Endothelial cell of umbilical vein (primary cell): ENCODE measurements at regions of chr1 and their contacts with region 1.

Region 1: GRCh38 chr1:6924891-6925290 is 139.6 kb downstream of the CAMTA1 start:
- DNase-seq: no peak
- H3K4me3 ChIP-seq: no peak overlapping the region
- H3K27ac ChIP-seq: no peak overlapping the region
- H3K4me1 ChIP-seq: no peaks in the 10 kb centered on the region
- H3K27me3 ChIP-seq: no peaks in the 10 kb centered on the region
- CTCF ChIP-seq: no peak
- POLR2A ChIP-seq: no peak

Region 2: GRCh38 chr1:6911974-6912373 is 12.9 kb before region 1 on chr1:
- CTCF ChIA-PET with region 1: no interaction called
- POLR2A ChIA-PET with region 1: no interaction called
- dilution Hi-C with region 1: no loop called
- intact Hi-C with region 1: loop called (anchors 1 kb)
- DNase-seq: peak; percentile 72
- H3K4me3 ChIP-seq: no peak overlapping the region
- H3K27ac ChIP-seq: no peak overlapping the region
- H3K4me1 ChIP-seq: peaks cover 2% of the 10 kb centered on the region
- H3K27me3 ChIP-seq: no peaks in the 10 kb centered on the region
- CTCF ChIP-seq: no peak
- POLR2A ChIP-seq: no peak

Region 3: GRCh38 chr1:6948861-6949260 is 24.0 kb after region 1 on chr1:
- CTCF ChIA-PET with region 1: no interaction called
- POLR2A ChIA-PET with region 1: no interaction called
- dilution Hi-C with region 1: no loop called
- intact Hi-C with region 1: no loop called
- DNase-seq: no peak
- H3K4me3 ChIP-seq: no peak overlapping the region
- H3K27ac ChIP-seq: no peak overlapping the region
- H3K4me1 ChIP-seq: no peaks in the 10 kb centered on the region
- H3K27me3 ChIP-seq: no peaks in the 10 kb centered on the region
- CTCF ChIP-seq: no peak
- POLR2A ChIP-seq: no peak